ENCODE measurements at regions of chr5 and their contacts with region 1.

Region 1: GRCh38 chr5:141564216-141564692 is 54.5 kb downstream of the DIAPH1 start:
- DNase-seq: peak; percentile 82
- H3K4me3 ChIP-seq: no peak overlapping the region
- H3K27ac ChIP-seq: no peak overlapping the region
- H3K4me1 ChIP-seq: no peaks in the 10 kb centered on the region
- H3K27me3 ChIP-seq: no peaks in the 10 kb centered on the region
- CTCF ChIP-seq: peak; percentile 94

Region 2: DNA sequence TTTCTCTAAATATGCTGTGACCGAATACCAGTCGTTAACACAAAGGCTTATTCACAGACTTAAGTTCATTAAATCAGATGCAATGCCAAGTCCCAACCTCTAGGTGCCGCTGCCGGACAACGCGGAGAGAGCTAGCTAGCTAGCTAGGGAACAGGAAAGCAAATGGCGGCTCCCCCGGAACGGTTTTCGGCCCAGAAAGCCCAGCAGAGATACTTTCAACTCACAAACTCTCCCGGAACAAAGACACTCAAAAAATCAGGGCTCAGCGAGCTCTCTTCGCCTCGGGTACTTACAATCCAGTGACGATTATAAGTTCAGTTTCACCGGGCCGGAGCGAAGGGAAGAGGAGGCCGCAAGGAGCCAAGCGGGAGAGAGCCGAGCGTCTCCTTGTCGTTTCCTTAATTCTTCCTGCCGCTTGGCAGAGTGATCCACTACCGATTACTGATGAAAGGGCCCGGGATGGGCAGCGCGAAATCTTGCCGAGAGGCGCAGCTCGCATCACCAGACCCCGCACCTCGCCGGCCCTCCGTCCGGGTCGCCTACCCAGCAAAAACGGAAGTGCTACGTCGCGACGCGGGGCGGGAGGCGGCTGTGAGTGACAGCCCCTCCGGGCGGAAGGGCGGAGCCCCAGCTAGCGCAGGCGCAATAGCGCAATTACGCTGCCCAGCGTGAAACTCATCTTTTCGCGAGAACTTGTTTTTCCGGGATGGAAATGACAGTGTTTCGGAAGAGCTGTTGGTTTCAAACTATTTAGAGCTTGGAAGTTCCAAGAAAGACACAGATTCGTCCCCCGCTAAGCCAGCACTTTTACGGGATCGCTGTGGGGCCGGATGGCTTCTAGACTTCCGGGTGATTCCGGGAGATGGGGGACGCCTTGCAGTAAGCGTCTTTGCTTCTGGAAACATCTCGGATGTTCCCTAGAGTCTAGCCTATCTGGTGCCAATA is 243.8 kb before region 1 on chr5 and contains the start of gene TAF7:
- intact Hi-C with region 1: loop called (anchors 5 kb)
- DNase-seq: peak; percentile 92
- H3K4me3 ChIP-seq: peak within 1 kb of the TSS; percentile 82
- H3K27ac ChIP-seq: peak within 1 kb of the TSS; percentile 93
- H3K4me1 ChIP-seq: no peaks in the 10 kb centered on the region
- H3K27me3 ChIP-seq: no peaks in the 10 kb centered on the region
- CTCF ChIP-seq: peak; percentile 79
- total RNA-seq, gene TAF7: 49.3 to 70.2 TPM

Region 3: DNA sequence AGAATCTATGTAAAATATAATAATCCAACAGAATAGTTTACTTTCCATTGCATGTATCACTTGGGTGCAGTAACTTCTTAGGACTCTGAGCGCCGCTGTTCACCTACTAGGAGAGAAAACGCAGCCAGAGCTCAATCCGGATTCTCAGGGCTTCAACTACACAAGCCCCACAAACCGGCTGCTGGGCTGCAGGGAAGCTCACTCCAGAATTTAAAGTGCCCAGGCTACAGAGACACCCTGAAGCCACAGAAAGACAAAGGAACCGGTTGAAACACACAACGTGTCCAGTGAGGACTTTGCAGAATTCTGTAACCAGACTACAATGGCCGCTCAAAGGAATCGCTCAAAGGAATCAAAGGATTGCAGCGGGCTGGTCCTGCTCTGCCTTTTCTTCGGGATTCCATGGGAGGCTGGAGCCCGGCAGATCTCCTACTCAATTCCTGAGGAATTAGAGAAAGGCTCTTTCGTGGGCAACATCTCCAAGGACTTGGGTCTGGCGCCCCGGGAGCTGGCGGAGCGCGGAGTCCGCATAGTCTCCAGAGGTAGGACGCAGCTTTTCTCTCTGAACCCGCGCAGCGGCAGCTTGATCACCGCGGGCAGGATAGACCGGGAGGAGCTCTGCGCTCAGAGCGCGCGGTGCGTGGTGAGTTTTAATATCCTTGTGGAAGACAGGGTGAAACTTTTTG is 151.3 kb before region 1 on chr5 and contains the start of gene PCDHGA10:
- intact Hi-C with region 1: loop called (anchors 10 kb)
- DNase-seq: peak; percentile 67
- H3K4me3 ChIP-seq: peak within 1 kb of the TSS; percentile 28
- H3K27ac ChIP-seq: no peak within 1 kb of the TSS
- H3K4me1 ChIP-seq: no peaks in the 10 kb centered on the region
- H3K27me3 ChIP-seq: no peaks in the 10 kb centered on the region
- CTCF ChIP-seq: peak; percentile 26
- total RNA-seq, gene PCDHGA10: 2.7 to 4.7 TPM

Region 4: DNA sequence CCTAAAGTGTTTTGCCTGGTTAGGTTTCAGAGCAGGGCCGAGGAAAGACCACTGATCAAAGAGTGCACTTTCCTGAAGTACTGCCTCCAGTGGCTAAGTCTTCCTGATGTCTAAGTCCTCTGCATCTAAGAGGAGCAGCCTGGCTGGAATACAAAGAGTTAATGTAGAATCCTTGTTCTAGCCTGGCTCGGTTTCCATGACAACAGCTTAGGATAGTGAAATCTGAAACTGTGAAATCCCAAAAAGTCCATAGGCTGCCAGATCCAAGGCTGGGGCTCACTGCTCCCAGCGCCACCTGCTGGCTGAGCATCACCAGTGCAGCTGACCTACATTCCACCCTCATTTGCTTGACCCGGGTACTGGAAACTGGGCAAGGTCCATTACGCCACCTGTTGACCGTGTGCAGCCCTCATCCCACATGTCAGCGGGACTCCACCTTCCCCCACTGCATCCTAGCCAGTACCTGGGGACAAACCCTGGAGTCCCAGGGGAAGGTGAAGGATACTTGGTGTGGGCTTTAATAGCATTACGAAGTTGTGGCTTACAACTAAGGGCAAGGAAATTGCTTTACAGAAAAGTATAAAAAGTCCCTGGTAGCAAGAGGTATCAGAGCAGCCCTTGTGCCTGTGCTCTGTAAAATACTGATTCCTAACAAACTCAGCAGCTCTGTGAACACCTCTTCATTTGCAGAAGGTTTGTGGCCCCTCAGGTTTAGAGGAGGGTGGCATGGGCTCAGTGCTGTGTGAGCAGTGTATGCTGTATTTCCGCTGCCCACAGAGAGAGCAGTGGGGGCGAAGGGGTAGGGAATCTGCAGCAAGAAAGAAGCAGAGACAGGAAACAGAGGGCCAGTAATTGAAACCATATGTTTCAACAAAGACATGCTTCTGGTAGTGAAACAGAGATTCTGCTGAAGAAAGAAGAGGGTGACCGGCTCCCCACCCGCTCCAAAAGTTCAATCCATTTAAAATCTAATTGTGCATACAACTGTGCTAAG is 39.4 kb before region 1 on chr5:
- intact Hi-C with region 1: loop called (anchors 5 kb)
- DNase-seq: peak; percentile 88
- H3K4me3 ChIP-seq: no peak overlapping the region
- H3K27ac ChIP-seq: peak overlapping the region; percentile 43
- H3K4me1 ChIP-seq: peaks cover 11% of the 10 kb centered on the region
- H3K27me3 ChIP-seq: no peaks in the 10 kb centered on the region
- CTCF ChIP-seq: peak; percentile 98

Region 5: GRCh38 chr5:141636413-141637122 is 72.3 kb after region 1 on chr5 and contains the starts of genes HDAC3 and RELL2:
- intact Hi-C with region 1: no loop called
- DNase-seq: peak; percentile 97
- H3K4me3 ChIP-seq: peak within 1 kb of the TSS; percentile 78
- H3K27ac ChIP-seq: peak within 1 kb of the TSS; percentile 58
- H3K4me1 ChIP-seq: peaks cover 13% of the 10 kb centered on the region
- H3K27me3 ChIP-seq: no peaks in the 10 kb centered on the region
- CTCF ChIP-seq: no peak
- total RNA-seq, gene HDAC3: 36.6 to 44.0 TPM
- total RNA-seq, gene RELL2: 2.1 to 6.7 TPM